ENCODE measurements at regions of chr13 and their contacts with region 1.

Region 1: DNA sequence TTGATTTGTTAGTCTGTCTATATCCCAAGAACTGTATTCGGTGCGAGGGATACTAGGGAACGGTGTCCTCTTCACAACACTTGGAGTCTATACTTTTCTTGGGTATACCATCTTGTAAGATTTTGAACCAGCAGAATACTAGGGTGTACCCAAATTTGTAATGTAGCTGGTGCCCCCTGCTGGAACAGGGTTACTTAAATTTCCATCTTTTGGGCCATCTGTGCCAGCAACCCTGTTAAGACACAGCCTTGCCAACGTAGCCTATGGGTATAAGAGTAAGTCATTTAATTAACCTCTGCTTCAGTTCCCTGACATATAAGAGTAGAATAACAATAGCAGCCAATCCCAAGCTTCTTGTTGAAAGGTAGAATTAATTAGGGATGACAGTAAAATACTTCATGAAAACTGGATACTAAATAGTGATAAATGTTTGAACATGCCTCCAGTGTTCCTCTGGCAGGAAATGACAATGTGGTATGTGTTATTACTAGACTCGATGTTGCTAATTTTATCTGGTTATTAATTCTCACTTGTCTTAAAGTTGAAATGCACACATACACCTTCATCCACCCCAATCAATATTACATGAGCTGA is 607.6 kb downstream of the FGF9 start:
- DNase-seq: peak; percentile 43
- ATAC-seq: peak; percentile 97
- H3K4me3 ChIP-seq: no peak overlapping the region
- H3K27ac ChIP-seq: no peak overlapping the region
- H3K4me1 ChIP-seq: no peaks in the 10 kb centered on the region
- H3K27me3 ChIP-seq: no peaks in the 10 kb centered on the region
- CTCF ChIP-seq: peak; percentile 47 to 76 (median 59); a peak in 4 of 6 replicates
- EP300 ChIP-seq: no peak
- POLR2A ChIP-seq: no peak
- RAD21 ChIP-seq: peak; percentile 91

Region 2: GRCh38 chr13:21849323-21849722 is 429.1 kb before region 1 on chr13:
- CTCF ChIA-PET with region 1: no interaction called
- POLR2A ChIA-PET with region 1: no interaction called
- RAD21 ChIA-PET with region 1: interaction called, 3 read pairs
- SMC1A ChIA-PET with region 1: interaction called, 4 read pairs
- in situ Hi-C with region 1: no loop called
- intact Hi-C with region 1: loop called (anchors 2 kb)
- DNase-seq: peak; percentile 4
- ATAC-seq: peak; percentile 78
- H3K4me3 ChIP-seq: no peak overlapping the region
- H3K27ac ChIP-seq: no peak overlapping the region
- H3K4me1 ChIP-seq: no peaks in the 10 kb centered on the region
- H3K27me3 ChIP-seq: no peaks in the 10 kb centered on the region
- CTCF ChIP-seq: peak; percentile 45 to 55 (median 48); a peak in 5 of 6 replicates
- EP300 ChIP-seq: no peak
- POLR2A ChIP-seq: no peak
- RAD21 ChIP-seq: peak; percentile 61

Region 3: DNA sequence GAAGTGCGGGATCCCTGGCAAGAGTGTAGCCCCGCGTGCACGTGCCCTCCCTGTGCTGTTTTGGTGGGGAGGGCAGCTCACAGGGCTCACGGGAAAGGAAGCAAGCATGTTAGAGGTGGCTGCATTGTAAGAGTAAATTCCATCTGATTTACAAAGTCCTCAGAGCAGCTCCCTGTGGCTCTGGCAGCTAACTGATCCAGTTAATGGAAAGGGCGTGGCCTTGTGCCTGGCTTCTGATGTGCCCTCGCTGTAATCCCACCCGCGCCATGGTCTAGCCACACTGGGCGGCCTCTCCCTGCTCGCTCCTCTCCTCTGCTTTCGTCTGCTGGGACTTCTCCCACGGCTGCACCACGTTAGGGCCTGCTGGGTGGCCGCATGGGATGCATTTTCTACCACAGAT is 349.0 kb before region 1 on chr13:
- CTCF ChIA-PET with region 1: no interaction called
- POLR2A ChIA-PET with region 1: no interaction called
- RAD21 ChIA-PET with region 1: no interaction called
- SMC1A ChIA-PET with region 1: no interaction called
- in situ Hi-C with region 1: no loop called
- intact Hi-C with region 1: loop called (anchors 5 kb)
- DNase-seq: no peak
- ATAC-seq: no peak
- H3K4me3 ChIP-seq: no peak overlapping the region
- H3K27ac ChIP-seq: no peak overlapping the region
- H3K4me1 ChIP-seq: no peaks in the 10 kb centered on the region
- H3K27me3 ChIP-seq: no peaks in the 10 kb centered on the region
- CTCF ChIP-seq: no peak
- EP300 ChIP-seq: no peak
- POLR2A ChIP-seq: no peak
- RAD21 ChIP-seq: no peak

Region 4: GRCh38 chr13:22114630-22115311 is 163.7 kb before region 1 on chr13:
- CTCF ChIA-PET with region 1: no interaction called
- POLR2A ChIA-PET with region 1: no interaction called
- RAD21 ChIA-PET with region 1: interaction called, 8 read pairs
- SMC1A ChIA-PET with region 1: no interaction called
- in situ Hi-C with region 1: no loop called
- intact Hi-C with region 1: loop called (anchors 5 kb)
- DNase-seq: peak; percentile 99
- ATAC-seq: peak; percentile 92
- H3K4me3 ChIP-seq: no peak overlapping the region
- H3K27ac ChIP-seq: peak overlapping the region; percentile 78
- H3K4me1 ChIP-seq: peaks cover 18% of the 10 kb centered on the region
- H3K27me3 ChIP-seq: no peaks in the 10 kb centered on the region
- CTCF ChIP-seq: no peak
- EP300 ChIP-seq: peak; percentile 99 to 100
- POLR2A ChIP-seq: peak; percentile 58; the same call in 1 of the 2 replicates
- RAD21 ChIP-seq: peak; percentile 17; the same call in 1 of the 2 replicates

Region 5: DNA sequence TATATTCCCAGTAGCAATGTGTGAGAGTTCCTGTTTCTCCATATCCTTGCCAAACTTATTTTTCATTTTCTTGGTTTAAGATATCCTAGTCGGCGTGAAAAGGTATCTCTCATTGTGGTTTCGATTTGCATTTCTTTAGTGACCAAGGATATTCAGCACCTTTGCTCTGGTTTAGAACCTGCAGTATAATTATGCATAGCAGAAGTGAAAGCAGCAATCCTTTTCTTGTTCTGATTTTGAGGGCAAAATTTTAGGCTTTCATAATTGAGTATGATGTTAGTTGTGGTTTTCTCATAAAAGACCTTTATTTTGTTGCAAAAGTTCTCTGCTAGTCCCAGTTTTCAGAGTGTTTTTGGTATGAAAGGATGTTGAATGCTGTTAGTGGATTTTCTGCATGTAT is 116.6 kb before region 1 on chr13:
- CTCF ChIA-PET with region 1: no interaction called
- POLR2A ChIA-PET with region 1: no interaction called
- RAD21 ChIA-PET with region 1: no interaction called
- SMC1A ChIA-PET with region 1: interaction called, 3 read pairs
- in situ Hi-C with region 1: no loop called
- intact Hi-C with region 1: loop called (anchors 10 kb)
- DNase-seq: peak; percentile 74
- ATAC-seq: peak; percentile 93
- H3K4me3 ChIP-seq: peak overlapping the region; percentile 41; the same call in 1 of the 2 replicates
- H3K27ac ChIP-seq: peak overlapping the region; percentile 64
- H3K4me1 ChIP-seq: peaks cover 16% of the 10 kb centered on the region
- H3K27me3 ChIP-seq: no peaks in the 10 kb centered on the region
- CTCF ChIP-seq: no peak
- EP300 ChIP-seq: peak; percentile 87 to 98; a peak in 3 of 4 replicates
- POLR2A ChIP-seq: no peak
- RAD21 ChIP-seq: no peak